Activated T-helper 1 cell treated with anti-CD3 and anti-CD28 coated beads, Interleukin-12 subunit alpha, Interleukin-12 subunit beta, Interleukin-2, Interleukin-4 antibody, amounts not matched to agents 30 ng/mL and 10 ng/mL and 1 ng/mL, durations not matched to agents 14 hours and 24 hours and 36 hours (primary cell): ENCODE measurements at regions of chr3 and their contacts with region 1.

Region 1: GRCh38 chr3:179147873-179148615 is at the start of gene PIK3CA:
- DNase-seq: peak; percentile 90
- H3K4me3 Mint-ChIP-seq: peak within 1 kb of the TSS; percentile 93
- H3K27ac Mint-ChIP-seq: peak within 1 kb of the TSS; percentile 97
- H3K4me1 Mint-ChIP-seq: peaks cover 38% of the 10 kb centered on the region
- H3K27me3 Mint-ChIP-seq: peaks cover 23% of the 10 kb centered on the region
- total RNA-seq, gene PIK3CA: 18.9 and 19.7 TPM in 2 replicates

Region 2: GRCh38 chr3:177337541-177338331 is 1810.3 kb before region 1 on chr3:
- intact Hi-C with region 1: loop called (anchors 2 kb)
- DNase-seq: peak; percentile 66
- H3K4me3 Mint-ChIP-seq: peak overlapping the region; percentile 51
- H3K27ac Mint-ChIP-seq: peak overlapping the region; percentile 95
- H3K4me1 Mint-ChIP-seq: peaks cover 65% of the 10 kb centered on the region
- H3K27me3 Mint-ChIP-seq: peaks cover 8% of the 10 kb centered on the region

Region 3: GRCh38 chr3:179015551-179016020 is 132.5 kb before region 1 on chr3:
- intact Hi-C with region 1: loop called (anchors 1 kb)
- DNase-seq: peak; percentile 68
- H3K4me3 Mint-ChIP-seq: no peak overlapping the region
- H3K27ac Mint-ChIP-seq: peak overlapping the region; percentile 24
- H3K4me1 Mint-ChIP-seq: peaks cover 55% of the 10 kb centered on the region
- H3K27me3 Mint-ChIP-seq: peaks cover 7% of the 10 kb centered on the region

Region 4: GRCh38 chr3:179026636-179027035 is 121.4 kb before region 1 on chr3:
- intact Hi-C with region 1: no loop called
- DNase-seq: no peak
- H3K4me3 Mint-ChIP-seq: no peak overlapping the region
- H3K27ac Mint-ChIP-seq: no peak overlapping the region
- H3K4me1 Mint-ChIP-seq: peaks cover 18% of the 10 kb centered on the region
- H3K27me3 Mint-ChIP-seq: no peaks in the 10 kb centered on the region

Region 5: DNA sequence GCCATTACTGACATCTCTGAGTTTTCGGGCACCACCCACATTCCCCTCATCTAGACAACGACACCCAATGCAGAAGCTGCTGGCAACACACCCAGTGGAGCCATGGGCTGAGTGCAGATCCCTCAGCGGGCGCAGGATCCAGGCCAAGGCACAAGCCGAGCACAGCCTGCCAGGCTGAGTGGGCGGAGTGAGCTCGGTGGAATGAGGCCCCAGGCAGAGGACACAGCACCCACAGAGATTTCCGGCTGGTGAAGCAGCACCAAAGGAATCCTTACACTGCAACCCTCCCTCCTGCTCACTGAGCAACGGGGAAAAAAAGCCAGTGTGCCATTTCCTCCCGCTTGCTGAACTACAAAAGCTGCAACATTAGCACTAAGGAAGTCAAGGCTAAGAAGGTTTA is 110.7 kb before region 1 on chr3:
- intact Hi-C with region 1: no loop called
- DNase-seq: peak; percentile 51
- H3K4me3 Mint-ChIP-seq: peak overlapping the region; percentile 69
- H3K27ac Mint-ChIP-seq: peak overlapping the region; percentile 79
- H3K4me1 Mint-ChIP-seq: peaks cover 15% of the 10 kb centered on the region
- H3K27me3 Mint-ChIP-seq: no peaks in the 10 kb centered on the region

Region 6: GRCh38 chr3:179133575-179133974 is 14.5 kb before region 1 on chr3:
- intact Hi-C with region 1: no loop called
- DNase-seq: no peak
- H3K4me3 Mint-ChIP-seq: no peak overlapping the region
- H3K27ac Mint-ChIP-seq: no peak overlapping the region
- H3K4me1 Mint-ChIP-seq: peaks cover 4% of the 10 kb centered on the region
- H3K27me3 Mint-ChIP-seq: peaks cover 16% of the 10 kb centered on the region

Region 7: DNA sequence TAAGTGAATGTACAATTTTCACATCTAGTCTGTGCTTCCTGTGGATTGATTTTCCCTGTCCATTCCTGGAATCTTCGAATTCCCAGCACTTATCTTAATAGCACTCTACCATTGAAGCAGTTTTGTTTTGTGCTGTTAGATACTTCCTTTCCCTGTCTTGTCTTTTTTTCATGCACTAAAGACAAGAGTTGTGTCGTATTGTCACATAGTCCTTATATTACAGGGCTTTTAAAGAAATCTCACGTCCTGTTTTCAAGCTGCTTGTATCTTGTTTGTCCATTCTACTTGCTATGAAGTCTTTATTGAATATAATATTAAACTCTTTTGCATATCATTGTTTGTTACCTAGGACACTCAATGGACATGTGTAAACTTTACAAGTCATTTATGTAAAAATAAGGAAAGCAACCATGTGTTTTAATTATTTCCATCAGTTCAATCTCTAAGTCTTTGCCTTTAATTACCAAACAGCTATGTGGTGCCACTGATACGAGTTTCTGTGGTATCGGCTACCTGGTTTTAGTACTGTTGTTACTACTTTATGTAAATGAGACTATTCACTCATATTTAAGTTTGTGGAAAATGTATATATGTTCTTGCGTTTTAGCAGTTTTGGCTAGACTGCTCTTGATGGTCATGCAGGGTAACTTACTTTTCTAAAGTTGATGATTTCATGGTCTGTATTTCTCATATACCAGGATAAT is 10.4 kb after region 1 on chr3:
- intact Hi-C with region 1: loop called (anchors 1 kb)
- DNase-seq: no peak
- H3K4me3 Mint-ChIP-seq: no peak overlapping the region
- H3K27ac Mint-ChIP-seq: no peak overlapping the region
- H3K4me1 Mint-ChIP-seq: peaks cover 5% of the 10 kb centered on the region
- H3K27me3 Mint-ChIP-seq: no peaks in the 10 kb centered on the region

Region 8: GRCh38 chr3:179260949-179261765 is 113.1 kb after region 1 on chr3:
- intact Hi-C with region 1: loop called (anchors 1 kb)
- DNase-seq: peak; percentile 66
- H3K4me3 Mint-ChIP-seq: peak overlapping the region; percentile 76
- H3K27ac Mint-ChIP-seq: no peak overlapping the region
- H3K4me1 Mint-ChIP-seq: peaks cover 13% of the 10 kb centered on the region
- H3K27me3 Mint-ChIP-seq: peaks cover 22% of the 10 kb centered on the region

Region 9: DNA sequence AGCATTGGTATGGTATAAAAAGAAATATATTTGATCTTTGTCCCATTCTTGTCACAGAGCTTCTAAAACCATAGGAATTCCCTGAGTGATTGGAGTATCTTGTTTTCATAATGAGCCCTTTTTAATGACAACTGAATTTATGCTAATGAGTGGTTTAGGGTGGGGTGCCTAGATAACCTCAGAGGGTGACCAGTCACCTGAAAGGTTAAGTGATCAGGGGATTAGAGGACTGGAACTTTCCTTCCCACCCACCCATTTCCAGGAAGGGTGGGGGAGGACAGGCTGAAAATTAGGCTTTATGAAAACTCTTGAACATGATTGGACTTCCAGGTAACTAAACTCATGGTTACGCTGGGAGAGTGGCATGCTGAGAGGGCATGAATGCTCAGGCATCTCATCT is 208.0 kb after region 1 on chr3:
- intact Hi-C with region 1: no loop called
- DNase-seq: no peak
- H3K4me3 Mint-ChIP-seq: no peak overlapping the region
- H3K27ac Mint-ChIP-seq: no peak overlapping the region
- H3K4me1 Mint-ChIP-seq: peaks cover 25% of the 10 kb centered on the region
- H3K27me3 Mint-ChIP-seq: no peaks in the 10 kb centered on the region

Region 10: GRCh38 chr3:179562591-179563270 is 414.7 kb after region 1 on chr3 and contains the start of gene ACTL6A:
- intact Hi-C with region 1: loop called (anchors 1 kb)
- DNase-seq: peak; percentile 98
- H3K4me3 Mint-ChIP-seq: peak within 1 kb of the TSS; percentile 93
- H3K27ac Mint-ChIP-seq: peak within 1 kb of the TSS; percentile 99
- H3K4me1 Mint-ChIP-seq: peaks cover 34% of the 10 kb centered on the region
- H3K27me3 Mint-ChIP-seq: peaks cover 12% of the 10 kb centered on the region
- total RNA-seq, gene ACTL6A: 113 and 117 TPM in 2 replicates

Region 11: DNA sequence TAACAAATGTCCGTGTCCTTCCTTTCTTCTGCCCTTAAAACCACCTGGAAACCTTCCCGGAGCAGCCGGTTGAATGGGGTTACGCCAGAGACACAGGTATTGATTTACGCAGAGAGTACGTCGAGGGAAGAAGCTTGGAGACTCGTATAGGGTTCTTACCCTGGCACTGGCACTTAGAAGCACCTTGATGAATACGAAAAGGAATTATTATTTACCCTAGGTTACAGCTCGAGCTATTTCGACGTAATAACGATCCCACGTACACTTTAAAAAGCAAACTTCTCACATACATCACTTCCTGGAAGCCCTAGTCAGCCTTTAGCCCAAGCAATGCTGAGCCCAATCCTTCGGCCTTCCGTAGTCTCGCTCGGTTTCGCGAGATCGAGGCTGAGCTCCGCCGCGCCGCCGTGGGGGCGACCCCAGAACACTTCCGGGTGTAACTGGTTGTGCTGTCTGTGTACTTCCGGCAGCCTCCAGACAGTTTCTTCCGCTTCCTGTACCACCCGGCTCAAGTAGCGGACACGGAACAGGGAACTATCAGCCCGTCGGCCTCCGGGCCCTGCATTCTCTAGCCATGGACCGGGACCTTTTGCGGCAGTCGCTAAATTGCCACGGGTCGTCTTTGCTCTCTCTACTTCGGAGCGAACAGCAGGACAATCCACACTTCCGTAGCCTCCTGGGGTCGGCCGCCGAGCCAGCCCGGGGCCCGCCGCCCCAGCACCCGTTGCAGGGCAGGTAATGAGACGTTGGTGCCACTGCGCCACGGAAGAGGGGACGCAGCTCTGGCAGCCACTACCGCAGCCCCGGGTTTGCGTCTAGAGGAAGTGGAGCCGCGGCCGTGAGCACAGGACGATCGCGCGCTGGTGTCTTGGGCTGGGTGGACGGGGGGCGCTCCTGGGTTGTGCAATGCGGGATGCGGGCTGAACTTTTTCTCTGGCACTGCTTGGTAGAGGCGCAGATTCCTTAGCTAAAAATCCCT is 1453.9 kb after region 1 on chr3 and contains the start of gene TTC14:
- intact Hi-C with region 1: loop called (anchors 5 kb)
- DNase-seq: peak; percentile 92
- H3K4me3 Mint-ChIP-seq: peak within 1 kb of the TSS; percentile 91
- H3K27ac Mint-ChIP-seq: peak within 1 kb of the TSS; percentile 95
- H3K4me1 Mint-ChIP-seq: peaks cover 23% of the 10 kb centered on the region
- H3K27me3 Mint-ChIP-seq: peaks cover 20% of the 10 kb centered on the region
- total RNA-seq, gene TTC14: 43.9 and 50.0 TPM in 2 replicates